ENCODE measurements at regions of chr19 and their contacts with region 1.

Region 1: GRCh38 chr19:41310033-41310758 is at the start of gene CCDC97:
- DNase-seq: peak; percentile 93
- ATAC-seq: peak; percentile 62
- H3K4me3 Mint-ChIP-seq: peak within 1 kb of the TSS; percentile 91
- H3K27ac Mint-ChIP-seq: peak within 1 kb of the TSS; percentile 96
- H3K4me1 Mint-ChIP-seq: peaks cover 50% of the 10 kb centered on the region
- H3K27me3 Mint-ChIP-seq: no peaks in the 10 kb centered on the region
- total RNA-seq, gene CCDC97: 37.8 to 40.8 TPM

Region 2: GRCh38 chr19:41298348-41298964 is 11.7 kb before region 1 on chr19:
- POLR2A ChIA-PET with region 1: interaction called, 16 read pairs
- DNase-seq: no peak
- ATAC-seq: no peak
- H3K4me3 Mint-ChIP-seq: peak overlapping the region; percentile 8
- H3K27ac Mint-ChIP-seq: peak overlapping the region; percentile 81
- H3K4me1 Mint-ChIP-seq: peaks cover 81% of the 10 kb centered on the region
- H3K27me3 Mint-ChIP-seq: no peaks in the 10 kb centered on the region